ENCODE measurements at regions of chr22 and their contacts with region 1.

Region 1: GRCh38 chr22:31399211-31400028 is at the start of gene DRG1:
- DNase-seq: peak; percentile 99
- ATAC-seq: peak; percentile 98
- H3K4me3 Mint-ChIP-seq: peak within 1 kb of the TSS; percentile 99
- H3K27ac Mint-ChIP-seq: peak within 1 kb of the TSS; percentile 91
- H3K4me1 Mint-ChIP-seq: peaks cover 18% of the 10 kb centered on the region
- H3K27me3 Mint-ChIP-seq: peaks cover under 1% of the 10 kb centered on the region
- total RNA-seq, gene DRG1: 104 to 106 TPM

Region 2: DNA sequence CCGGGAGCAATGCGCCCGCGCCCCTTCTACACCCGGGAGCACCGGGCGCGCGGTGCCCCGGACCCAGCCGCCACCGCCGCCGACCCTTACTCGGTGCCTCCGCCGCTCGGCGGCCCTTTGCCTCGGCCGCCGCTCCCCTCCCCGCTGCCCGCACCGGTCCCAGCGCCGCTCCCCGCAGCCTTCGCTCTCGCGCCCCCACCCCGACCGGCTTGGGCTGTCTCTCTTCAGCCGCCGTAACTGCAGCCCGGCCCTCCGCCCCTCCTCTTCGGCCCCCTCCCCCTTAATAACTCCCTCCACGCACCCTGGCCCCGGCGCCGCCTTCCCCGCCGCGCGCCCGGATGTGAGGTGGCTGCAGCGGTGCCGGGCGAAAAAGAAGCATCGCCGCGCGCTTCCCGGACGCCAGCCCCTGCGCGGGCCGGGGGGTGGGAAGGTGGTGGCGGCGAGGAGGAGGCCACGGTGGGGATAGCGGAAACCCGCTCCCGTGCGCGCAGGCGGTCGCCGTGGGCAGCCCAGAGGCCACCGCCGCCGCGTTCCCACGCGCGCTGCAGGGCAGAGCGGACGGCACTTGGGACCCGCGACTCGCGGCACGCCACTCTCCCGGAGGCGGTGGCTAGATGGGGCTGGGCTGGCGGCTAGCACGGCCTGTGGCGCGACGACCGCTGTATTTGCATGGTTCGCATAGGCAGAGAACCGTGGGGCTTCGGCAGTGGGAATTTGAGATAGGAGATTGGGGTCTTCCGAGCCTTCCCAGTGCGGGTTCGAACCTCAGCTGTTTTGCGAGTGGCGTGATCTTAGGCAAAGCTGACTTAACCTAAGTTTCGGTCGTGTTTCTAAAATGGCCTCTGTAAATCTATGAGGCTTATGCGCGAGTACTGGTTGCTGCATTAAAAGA is 90.4 kb after region 1 on chr22 and contains the start of gene EIF4ENIF1:
- CTCF ChIA-PET with region 1: interaction called, 4 read pairs
- POLR2A ChIA-PET with region 1: no interaction called
- intact Hi-C with region 1: loop called in 1 of 2 experiments (anchors 1 kb)
- DNase-seq: peak; percentile 92
- ATAC-seq: peak; percentile 75
- H3K4me3 Mint-ChIP-seq: peak within 1 kb of the TSS; percentile 86
- H3K27ac Mint-ChIP-seq: peak within 1 kb of the TSS; percentile 99
- H3K4me1 Mint-ChIP-seq: peaks cover 46% of the 10 kb centered on the region
- H3K27me3 Mint-ChIP-seq: no peaks in the 10 kb centered on the region
- total RNA-seq, gene EIF4ENIF1: 45.4 to 75.0 TPM